IMR-90 (cell line): ENCODE measurements at regions of chr9 and their contacts with region 1.

Region 1: GRCh38 chr9:69590266-69590665 is 81.9 kb downstream of the APBA1 start:
- DNase-seq: no peak
- ATAC-seq: no peak
- H3K4me3 ChIP-seq: no peak overlapping the region
- H3K27ac ChIP-seq: no peak overlapping the region
- H3K4me1 ChIP-seq: peaks cover 2% of the 10 kb centered on the region; the same call in 1 of the 2 replicates
- H3K27me3 ChIP-seq: no peaks in the 10 kb centered on the region
- CTCF ChIP-seq: no peak
- POLR2A ChIP-seq: no peak
- RAD21 ChIP-seq: no peak

Region 2: GRCh38 chr9:69622676-69623075 is 32.4 kb after region 1 on chr9:
- CTCF ChIA-PET with region 1: no interaction called
- POLR2A ChIA-PET with region 1: no interaction called
- dilution Hi-C with region 1: no loop called
- in situ Hi-C with region 1: no loop called
- intact Hi-C with region 1: loop called (anchors 1 kb)
- DNase-seq: peak; percentile 46
- ATAC-seq: 0 out of 2 replicates have a peak, but pooled peaks have one; percentile 14
- H3K4me3 ChIP-seq: no peak overlapping the region
- H3K27ac ChIP-seq: no peak overlapping the region
- H3K4me1 ChIP-seq: 0 out of 2 replicates have a peak, but pooled peaks cover 1% of the 10 kb centered on the region
- H3K27me3 ChIP-seq: no peaks in the 10 kb centered on the region
- CTCF ChIP-seq: no peak
- POLR2A ChIP-seq: no peak
- RAD21 ChIP-seq: no peak

Region 3: GRCh38 chr9:69633716-69634115 is 43.5 kb after region 1 on chr9:
- CTCF ChIA-PET with region 1: no interaction called
- POLR2A ChIA-PET with region 1: no interaction called
- dilution Hi-C with region 1: no loop called
- in situ Hi-C with region 1: no loop called
- intact Hi-C with region 1: no loop called
- DNase-seq: no peak
- ATAC-seq: no peak
- H3K4me3 ChIP-seq: no peak overlapping the region
- H3K27ac ChIP-seq: no peak overlapping the region
- H3K4me1 ChIP-seq: no peaks in the 10 kb centered on the region; the same call in 1 of the 2 replicates
- H3K27me3 ChIP-seq: no peaks in the 10 kb centered on the region
- CTCF ChIP-seq: no peak
- POLR2A ChIP-seq: no peak
- RAD21 ChIP-seq: no peak